Ovary (tissue), 10 donors: ENCODE measurements at regions of chr12 and their contacts with region 1.

Region 1: DNA sequence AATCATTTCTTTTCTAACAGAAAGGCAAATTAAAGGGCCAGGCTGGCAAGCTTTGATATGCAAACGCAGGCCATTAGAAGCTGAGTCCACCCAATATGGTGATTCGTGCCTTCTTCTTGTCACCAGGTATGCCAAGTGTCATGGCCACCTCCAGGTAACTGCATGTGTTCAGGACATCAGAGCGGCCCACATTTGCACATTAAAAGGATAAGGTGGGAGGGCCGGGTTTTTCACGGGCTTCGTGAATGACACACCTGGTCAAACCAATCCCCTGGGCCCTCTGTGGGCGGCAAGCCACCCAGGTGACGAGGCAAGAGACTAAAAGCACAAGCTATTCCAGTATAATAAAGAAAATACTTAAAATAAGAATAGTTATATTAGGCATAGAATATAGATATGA is 75.9 kb upstream of the TSPAN11 start:
- DNase-seq: no peak
- H3K4me3 ChIP-seq: no peak overlapping the region
- H3K27ac ChIP-seq: no peak overlapping the region
- H3K4me1 ChIP-seq: no peaks in the 10 kb centered on the region
- H3K27me3 ChIP-seq: no peaks in the 10 kb centered on the region
- CTCF ChIP-seq: no peak
- EP300 ChIP-seq: no peak
- POLR2A ChIP-seq: no peak

Region 2: GRCh38 chr12:31245822-31246469 is 395.3 kb after region 1 on chr12:
- intact Hi-C with region 1: loop called in 1 of 4 experiments (anchors 10 kb)
- DNase-seq: no peak
- H3K4me3 ChIP-seq: no peak overlapping the region
- H3K27ac ChIP-seq: no peak overlapping the region
- H3K4me1 ChIP-seq: no peaks in the 10 kb centered on the region
- H3K27me3 ChIP-seq: no peaks in the 10 kb centered on the region
- CTCF ChIP-seq: no peak
- EP300 ChIP-seq: no peak
- POLR2A ChIP-seq: no peak

Region 3: DNA sequence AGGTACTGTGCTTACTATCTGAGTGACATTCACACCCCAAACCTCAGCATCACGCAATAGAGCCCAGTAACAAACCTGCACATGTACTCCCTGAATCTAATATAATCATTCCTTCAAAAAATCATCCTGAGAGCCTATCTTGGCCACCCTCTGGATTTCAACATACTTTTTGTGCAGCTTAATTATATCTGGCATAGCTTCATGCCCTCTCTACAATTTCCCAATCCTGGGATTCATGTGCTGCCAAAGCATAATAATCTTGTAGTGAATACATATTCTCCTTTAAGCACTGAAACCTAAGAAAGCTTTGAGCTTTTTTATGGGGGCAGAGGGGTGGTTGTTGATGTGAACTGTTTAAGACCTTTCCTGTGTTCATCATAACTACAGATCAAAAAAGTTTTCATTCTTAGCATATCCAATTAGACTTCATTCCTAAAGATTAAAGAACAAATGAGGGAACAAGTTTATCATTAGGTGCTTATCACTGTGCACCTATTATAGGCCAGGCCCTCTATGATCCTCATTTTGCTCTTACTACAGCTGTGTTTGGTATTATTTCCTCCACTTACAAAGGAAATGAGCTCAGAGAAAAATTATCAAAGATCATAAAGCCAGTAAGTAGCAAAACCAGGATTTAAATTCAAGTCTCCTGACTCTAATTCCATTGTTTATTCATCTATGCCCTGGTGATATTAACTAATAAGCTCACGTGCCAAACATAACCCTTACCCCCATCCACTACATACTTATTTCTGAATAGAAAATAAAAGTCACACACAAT is 424.0 kb after region 1 on chr12:
- intact Hi-C with region 1: loop called in 1 of 4 experiments (anchors 10 kb)
- DNase-seq: no peak
- H3K4me3 ChIP-seq: no peak overlapping the region
- H3K27ac ChIP-seq: no peak overlapping the region
- H3K4me1 ChIP-seq: peaks cover 1% of the 10 kb centered on the region
- H3K27me3 ChIP-seq: no peaks in the 10 kb centered on the region
- CTCF ChIP-seq: no peak
- EP300 ChIP-seq: no peak
- POLR2A ChIP-seq: no peak